Right cardiac atrium (tissue), 5 donors: ENCODE measurements at regions of chr1 and their contacts with region 1.

Region 1: DNA sequence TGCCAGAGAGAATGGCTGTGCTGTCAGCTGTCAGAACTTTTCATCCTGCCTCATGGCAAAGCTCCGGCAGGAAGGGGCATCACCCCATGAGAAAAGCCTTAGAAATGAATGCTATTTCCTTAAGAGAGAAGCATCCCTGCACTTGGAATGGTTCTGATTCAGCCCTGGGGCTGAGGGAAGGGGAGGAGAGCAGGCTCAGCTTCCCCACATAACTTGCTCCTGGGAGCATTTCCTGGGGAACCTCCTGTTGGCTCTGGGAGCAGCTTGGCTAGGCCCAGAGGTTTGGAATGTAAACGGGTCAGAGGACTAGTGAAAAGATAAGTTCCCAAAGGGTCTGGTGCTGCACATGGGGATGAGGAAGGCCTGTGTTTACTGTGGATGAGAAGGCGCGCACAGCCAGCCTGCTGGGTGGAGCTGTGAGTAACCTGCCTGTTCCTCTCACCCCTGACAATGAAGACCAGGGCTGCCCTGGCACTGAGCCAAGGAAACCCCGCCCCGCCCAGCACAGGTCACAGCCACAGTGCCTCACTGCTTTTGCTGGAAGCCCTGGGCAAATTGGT is 5.0 kb downstream of the PRELP start:
- DNase-seq: peak; percentile 58 to 84 (median 82)
- ATAC-seq: peak; percentile 67 to 85
- H3K4me3 ChIP-seq: peak overlapping the region; percentile 12
- H3K27ac ChIP-seq: peak overlapping the region; percentile 14
- H3K4me1 ChIP-seq: peaks cover 2% of the 10 kb centered on the region
- H3K27me3 ChIP-seq: no peaks in the 10 kb centered on the region

Region 2: DNA sequence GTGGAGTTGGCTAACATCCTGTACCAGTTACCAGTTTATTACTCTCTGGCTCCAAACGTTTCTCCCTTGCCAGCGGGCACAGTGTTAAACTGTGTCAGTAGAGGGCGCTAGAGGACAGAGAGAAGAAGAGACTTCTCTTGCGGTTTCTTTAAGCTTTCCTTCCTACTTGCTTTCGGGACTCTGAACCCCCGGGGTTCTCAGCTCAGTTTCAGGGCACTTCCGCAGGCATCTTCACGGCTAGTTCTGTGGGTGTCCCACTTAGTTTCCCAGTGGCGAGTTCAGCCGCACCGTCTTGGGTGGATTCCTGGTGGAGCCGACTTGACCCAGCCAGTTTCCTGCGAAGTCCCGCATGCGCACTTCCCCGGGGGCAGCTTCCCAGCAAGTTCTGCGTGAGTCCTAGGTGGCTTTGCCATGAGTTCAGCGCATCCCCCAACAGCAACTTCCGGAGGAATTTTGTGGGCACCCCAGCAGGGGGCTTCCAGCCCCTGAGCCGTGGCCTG is 213.2 kb before region 1 on chr1:
- intact Hi-C with region 1: loop called (anchors 5 to 10 kb)
- DNase-seq: peak; percentile 87 to 94 (median 93)
- ATAC-seq: peak; percentile 73
- H3K4me3 ChIP-seq: peak overlapping the region; percentile 78
- H3K27ac ChIP-seq: peak overlapping the region; percentile 93
- H3K4me1 ChIP-seq: no peaks in the 10 kb centered on the region
- H3K27me3 ChIP-seq: no peaks in the 10 kb centered on the region

Region 3: GRCh38 chr1:203346060-203346768 is 134.4 kb before region 1 on chr1:
- intact Hi-C with region 1: loop called in 3 of 4 experiments (anchors 2 to 5 kb)
- DNase-seq: no peak
- ATAC-seq: no peak
- H3K4me3 ChIP-seq: no peak overlapping the region
- H3K27ac ChIP-seq: peak overlapping the region; percentile 25
- H3K4me1 ChIP-seq: peaks cover 4% of the 10 kb centered on the region
- H3K27me3 ChIP-seq: no peaks in the 10 kb centered on the region